PC-3 (cell line): ENCODE measurements at regions of chr1 and their contacts with region 1.

Region 1: GRCh38 chr1:227946624-227947385 is 927 bp downstream of the WNT9A start:
- DNase-seq: peak; percentile 98
- ATAC-seq: peak; percentile 63
- H3K4me3 ChIP-seq: peak overlapping the region; percentile 75
- H3K27ac ChIP-seq: peak overlapping the region; percentile 77
- H3K4me1 ChIP-seq: peaks cover 28% of the 10 kb centered on the region
- H3K27me3 ChIP-seq: no peaks in the 10 kb centered on the region
- CTCF ChIP-seq: peak; percentile 99

Region 2: DNA sequence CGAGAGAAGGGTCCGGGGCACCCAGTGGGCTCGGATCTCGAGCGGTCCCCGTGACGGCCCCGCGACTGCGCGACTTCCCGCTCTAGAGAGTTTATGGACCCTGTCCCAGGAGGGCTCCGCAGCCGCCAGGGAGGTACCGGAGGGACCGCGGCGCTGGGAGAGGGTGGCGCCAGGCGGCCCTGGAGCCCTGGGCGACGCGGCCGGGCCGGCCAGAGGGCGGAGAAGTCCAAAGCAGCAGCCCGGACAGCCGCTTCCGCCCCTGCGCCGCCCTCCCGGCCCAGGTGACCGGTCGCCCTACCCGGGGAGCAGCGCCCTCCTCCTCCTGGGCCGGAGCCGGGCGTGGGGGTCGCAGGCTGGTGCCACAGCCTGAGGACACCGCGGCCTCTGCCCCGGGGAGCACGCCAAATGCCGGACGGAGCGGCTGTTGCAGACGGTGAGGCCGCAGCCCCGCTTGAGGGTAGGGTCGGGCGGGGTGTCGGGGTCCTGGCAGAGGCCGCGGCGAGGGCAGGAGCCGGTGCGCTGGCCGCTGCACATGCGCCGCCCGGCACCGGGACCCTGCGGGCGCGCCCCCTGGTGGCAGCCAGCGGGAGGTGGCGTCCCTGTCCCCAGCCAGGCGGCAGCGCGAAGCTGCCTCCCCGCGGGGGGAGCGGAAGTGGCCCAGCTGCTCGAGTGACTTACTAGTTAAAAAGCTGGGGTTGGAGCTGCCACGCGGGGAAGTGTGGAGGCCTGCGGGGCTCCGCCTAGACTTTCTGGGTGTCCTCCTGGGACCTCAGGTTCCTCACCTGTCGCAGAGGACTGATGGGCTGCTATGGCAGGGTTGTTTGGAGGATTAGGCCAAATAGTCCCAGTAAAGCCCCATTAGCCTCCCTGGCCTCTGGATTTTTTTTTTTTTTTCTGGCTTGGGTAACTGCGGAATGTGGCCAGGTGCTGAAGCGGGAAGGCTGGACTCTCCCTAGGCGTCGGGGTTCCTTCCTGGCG is 404.4 kb before region 1 on chr1:
- CTCF ChIA-PET with region 1: no interaction called
- POLR2A ChIA-PET with region 1: no interaction called
- intact Hi-C with region 1: loop called (anchors 10 kb)
- DNase-seq: peak; percentile 98
- ATAC-seq: peak; percentile 95
- H3K4me3 ChIP-seq: peak overlapping the region; percentile 66
- H3K27ac ChIP-seq: no peak overlapping the region
- H3K4me1 ChIP-seq: peaks cover 10% of the 10 kb centered on the region; the same call in 1 of the 2 replicates
- H3K27me3 ChIP-seq: no peaks in the 10 kb centered on the region
- CTCF ChIP-seq: peak; percentile 97

Region 3: GRCh38 chr1:227728059-227728891 is 218.5 kb before region 1 on chr1:
- CTCF ChIA-PET with region 1: no interaction called
- POLR2A ChIA-PET with region 1: no interaction called
- intact Hi-C with region 1: loop called (anchors 1 kb)
- DNase-seq: peak; percentile 98
- ATAC-seq: peak; percentile 89
- H3K4me3 ChIP-seq: peak overlapping the region; percentile 82
- H3K27ac ChIP-seq: peak overlapping the region; percentile 29
- H3K4me1 ChIP-seq: peaks cover 19% of the 10 kb centered on the region
- H3K27me3 ChIP-seq: no peaks in the 10 kb centered on the region
- CTCF ChIP-seq: 0 out of 2 replicates have a peak, but pooled peaks have one; percentile 14

Region 4: GRCh38 chr1:227787513-227788270 is 159.1 kb before region 1 on chr1:
- CTCF ChIA-PET with region 1: no interaction called
- POLR2A ChIA-PET with region 1: interaction called, 8 read pairs
- intact Hi-C with region 1: loop called (anchors 1 kb)
- DNase-seq: peak; percentile 100
- ATAC-seq: peak; percentile 84
- H3K4me3 ChIP-seq: peak overlapping the region; percentile 67
- H3K27ac ChIP-seq: no peak overlapping the region
- H3K4me1 ChIP-seq: peaks cover 18% of the 10 kb centered on the region
- H3K27me3 ChIP-seq: no peaks in the 10 kb centered on the region
- CTCF ChIP-seq: no peak

Region 5: GRCh38 chr1:227805606-227806197 is 141.1 kb before region 1 on chr1:
- CTCF ChIA-PET with region 1: interaction called, 10 read pairs
- POLR2A ChIA-PET with region 1: no interaction called
- intact Hi-C with region 1: loop called (anchors 1 kb)
- DNase-seq: peak; percentile 100
- ATAC-seq: peak; percentile 99
- H3K4me3 ChIP-seq: no peak overlapping the region
- H3K27ac ChIP-seq: peak overlapping the region; percentile 81
- H3K4me1 ChIP-seq: peaks cover 20% of the 10 kb centered on the region
- H3K27me3 ChIP-seq: no peaks in the 10 kb centered on the region
- CTCF ChIP-seq: peak; percentile 79

Region 6: GRCh38 chr1:227934476-227935313 is 12.1 kb before region 1 on chr1:
- CTCF ChIA-PET with region 1: no interaction called
- POLR2A ChIA-PET with region 1: interaction called, 3 read pairs
- intact Hi-C with region 1: loop called (anchors 1 kb)
- DNase-seq: peak; percentile 100
- ATAC-seq: peak; percentile 87
- H3K4me3 ChIP-seq: peak overlapping the region; percentile 25
- H3K27ac ChIP-seq: peak overlapping the region; percentile 94
- H3K4me1 ChIP-seq: peaks cover 49% of the 10 kb centered on the region
- H3K27me3 ChIP-seq: no peaks in the 10 kb centered on the region
- CTCF ChIP-seq: no peak

Region 7: DNA sequence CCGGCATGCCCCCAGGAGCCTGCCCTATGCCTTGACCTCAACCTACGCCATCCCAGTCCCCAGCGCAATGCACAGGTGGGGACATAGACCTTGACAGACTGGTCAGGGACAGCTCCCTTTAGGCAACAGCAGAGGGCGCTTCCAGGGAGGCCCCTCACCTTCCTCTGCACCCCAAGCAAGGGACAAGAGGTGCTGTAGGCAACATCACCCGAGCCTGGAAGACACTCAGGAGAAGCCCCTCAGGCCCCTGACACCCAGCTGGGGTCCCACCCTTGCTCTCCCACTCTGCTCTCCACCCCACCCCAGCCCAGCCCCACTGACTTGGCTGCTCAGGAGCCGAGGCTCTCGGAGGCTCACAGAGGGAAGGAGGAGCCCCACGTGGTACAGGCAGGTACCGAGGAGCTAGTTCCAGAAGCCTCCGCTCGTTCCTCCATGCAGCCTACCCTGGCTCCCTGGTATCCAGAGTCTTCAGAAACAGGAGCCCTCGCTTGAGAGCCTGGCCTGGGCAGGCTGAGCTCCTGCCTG is 57.6 kb after region 1 on chr1:
- CTCF ChIA-PET with region 1: no interaction called
- POLR2A ChIA-PET with region 1: no interaction called
- intact Hi-C with region 1: no loop called
- DNase-seq: peak; percentile 71
- ATAC-seq: peak; percentile 65
- H3K4me3 ChIP-seq: no peak overlapping the region
- H3K27ac ChIP-seq: no peak overlapping the region
- H3K4me1 ChIP-seq: peaks cover 4% of the 10 kb centered on the region; the same call in 1 of the 2 replicates
- H3K27me3 ChIP-seq: peaks cover 33% of the 10 kb centered on the region
- CTCF ChIP-seq: peak; percentile 94